ENCODE measurements at regions of chr18 and their contacts with region 1.

Region 1: DNA sequence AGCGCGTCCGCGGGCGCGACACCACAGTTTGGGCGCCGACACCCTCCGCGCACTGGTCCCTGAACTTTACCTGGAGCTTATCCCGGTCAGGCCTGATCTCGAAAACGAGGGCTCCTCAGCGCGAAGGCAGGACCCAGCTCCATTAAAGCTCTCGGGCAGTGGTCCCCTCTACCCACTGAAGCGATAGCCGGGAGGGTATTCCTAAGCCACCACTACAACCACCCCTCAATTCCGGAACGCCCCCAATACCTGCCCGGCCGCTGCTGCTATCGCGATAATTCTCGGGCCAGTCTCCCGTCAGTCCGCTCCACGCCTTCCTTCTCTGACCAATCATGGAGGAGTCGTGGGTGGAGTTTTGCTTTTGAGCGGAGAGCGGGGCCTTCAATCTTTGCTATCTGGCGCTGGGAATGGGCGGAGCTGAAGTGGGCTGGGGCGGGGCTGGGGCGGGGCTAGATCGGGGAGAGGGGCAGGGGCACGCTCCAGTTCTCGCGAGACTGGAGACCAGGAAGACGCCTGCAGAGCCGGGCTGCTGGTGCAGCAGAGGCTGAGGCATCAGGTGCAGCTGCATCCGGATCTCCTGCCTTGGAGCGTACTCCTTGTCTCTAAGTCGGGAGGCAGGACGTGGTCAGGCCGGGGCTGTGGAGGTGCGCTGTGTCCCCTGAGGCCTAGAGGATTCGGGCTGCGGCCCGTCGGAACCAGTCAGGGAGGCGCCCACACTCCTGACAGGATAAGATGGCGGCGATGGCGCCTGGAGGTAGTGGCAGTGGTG is at the starts of genes PIGN and RELCH:
- DNase-seq: peak; percentile 96 to 98
- ATAC-seq: peak; percentile 97 to 98
- H3K4me3 ChIP-seq: peak within 1 kb of the TSS; percentile 94 to 99 (median 97)
- H3K27ac ChIP-seq: peak within 1 kb of the TSS; percentile 84 to 90 (median 87)
- H3K4me1 ChIP-seq: peaks cover 26 to 36% of the 10 kb centered on the region in 2 donors
- H3K27me3 ChIP-seq: no peaks in the 10 kb centered on the region
- CTCF ChIP-seq: peak in 1 of 5 experiments; percentile 8
- POLR2A ChIP-seq: peak; percentile 58 to 82
- total RNA-seq, gene PIGN: 10.7 to 18.7 (median 14.8) TPM
- total RNA-seq, gene RELCH: 8.4 to 16.8 (median 12.6) TPM

Region 2: DNA sequence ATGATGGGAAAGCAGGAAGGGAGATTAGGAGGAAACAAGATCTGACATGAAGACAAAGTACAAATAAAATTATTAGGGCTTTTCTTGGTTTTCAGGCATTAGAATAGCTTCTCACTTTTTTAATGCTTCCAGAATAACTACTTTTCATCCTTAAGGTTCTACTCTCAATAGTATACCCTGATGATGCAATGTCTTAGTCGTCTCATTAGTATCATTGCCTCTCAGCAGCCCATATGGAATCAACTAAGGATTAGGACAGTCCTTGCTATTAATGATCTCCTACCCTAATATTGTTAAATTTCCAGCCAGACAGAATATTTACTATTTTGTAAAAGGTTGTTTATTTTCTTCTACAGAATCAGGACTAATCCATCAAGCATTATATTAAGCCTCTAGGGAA is 56.0 kb after region 1 on chr18:
- in situ Hi-C with region 1: loop called in 2 of 4 experiments (anchors 5 kb)
- intact Hi-C with region 1: no loop called
- DNase-seq: no peak
- ATAC-seq: no peak
- H3K4me3 ChIP-seq: no peak overlapping the region
- H3K27ac ChIP-seq: no peak overlapping the region
- H3K4me1 ChIP-seq: no peaks in the 10 kb centered on the region
- H3K27me3 ChIP-seq: no peaks in the 10 kb centered on the region
- CTCF ChIP-seq: no peak
- POLR2A ChIP-seq: no peak

Region 3: DNA sequence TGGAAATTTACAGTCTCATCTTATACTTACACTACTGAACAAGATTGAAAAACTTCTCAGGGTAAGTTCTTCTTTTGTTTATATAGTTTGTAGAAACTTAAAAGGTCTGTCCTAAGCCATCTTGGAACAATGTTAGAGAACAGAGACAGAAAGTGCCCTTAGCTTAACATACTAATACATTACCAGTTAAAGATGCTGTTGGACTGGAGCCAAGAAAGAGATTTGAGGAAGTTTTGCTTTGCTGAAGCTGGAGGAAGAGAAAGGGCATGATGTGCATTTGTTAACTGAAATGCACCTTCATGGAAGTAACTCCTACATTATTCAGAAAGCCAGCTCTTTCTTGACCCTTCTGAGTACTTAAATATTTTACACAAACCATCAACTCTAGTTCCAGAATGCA is 71.7 kb after region 1 on chr18:
- in situ Hi-C with region 1: loop called in 2 of 4 experiments (anchors 5 to 10 kb)
- intact Hi-C with region 1: no loop called
- DNase-seq: no peak
- ATAC-seq: no peak
- H3K4me3 ChIP-seq: no peak overlapping the region
- H3K27ac ChIP-seq: no peak overlapping the region
- H3K4me1 ChIP-seq: no peaks in the 10 kb centered on the region
- H3K27me3 ChIP-seq: no peaks in the 10 kb centered on the region
- CTCF ChIP-seq: no peak
- POLR2A ChIP-seq: no peak

Region 4: GRCh38 chr18:62566199-62566598 is 379.2 kb after region 1 on chr18:
- in situ Hi-C with region 1: loop called in 2 of 4 experiments (anchors 25 kb)
- intact Hi-C with region 1: no loop called
- DNase-seq: peak; percentile 40 to 70
- ATAC-seq: peak; percentile 68 to 91
- H3K4me3 ChIP-seq: no peak overlapping the region
- H3K27ac ChIP-seq: peak overlapping the region in 1 of 4 donors; percentile 19
- H3K4me1 ChIP-seq: no peaks in the 10 kb centered on the region
- H3K27me3 ChIP-seq: no peaks in the 10 kb centered on the region
- CTCF ChIP-seq: peak; percentile 15 to 45 (median 39)
- POLR2A ChIP-seq: no peak

Region 5: DNA sequence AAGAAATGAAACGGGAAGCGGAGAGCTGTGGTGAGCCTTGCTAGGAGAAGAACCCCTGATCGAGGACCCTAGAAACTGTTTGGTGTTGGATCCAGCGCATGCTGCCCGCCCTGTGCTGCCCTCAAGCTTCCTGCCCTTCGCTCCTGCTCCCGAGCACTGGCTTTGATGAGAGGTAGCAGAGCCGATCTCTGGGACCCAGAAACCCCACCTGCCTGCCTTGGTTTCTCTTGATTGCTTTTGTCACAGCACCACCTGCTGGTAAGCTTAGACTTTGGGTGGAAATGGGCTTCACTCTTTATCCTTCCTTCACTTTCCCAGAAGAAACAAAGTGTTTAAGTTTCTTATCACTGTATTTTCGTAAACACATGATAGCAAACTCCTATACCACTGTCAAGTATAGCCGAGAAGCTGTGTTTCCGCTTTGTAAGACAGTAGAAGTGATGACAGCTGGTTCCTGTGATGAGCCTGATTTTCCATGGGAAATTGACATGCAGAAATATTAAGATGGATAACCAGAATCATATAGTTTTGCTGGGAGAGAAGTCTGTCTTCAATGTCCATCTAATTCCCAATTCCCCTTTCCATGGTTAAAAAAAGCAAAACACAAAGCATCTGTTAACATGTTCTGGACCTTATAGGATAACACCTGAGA is 795.8 kb after region 1 on chr18:
- in situ Hi-C with region 1: loop called in 1 of 4 experiments (anchors 25 kb)
- intact Hi-C with region 1: no loop called
- DNase-seq: peak; percentile 24 to 25
- ATAC-seq: peak; percentile 77 to 86
- H3K4me3 ChIP-seq: peak overlapping the region in 3 of 4 donors; percentile 15 to 39 (median 34)
- H3K27ac ChIP-seq: no peak overlapping the region
- H3K4me1 ChIP-seq: no peaks in the 10 kb centered on the region
- H3K27me3 ChIP-seq: no peaks in the 10 kb centered on the region
- CTCF ChIP-seq: peak; percentile 62 to 78 (median 74)
- POLR2A ChIP-seq: no peak

Measured in gastrocnemius medialis (tissue), 4 donors.